ENCODE measurements at regions of chr4 and their contacts with region 1.

Region 1: GRCh38 chr4:69689599-69689998 is 36.6 kb upstream of the UGT2A1 start:
- DNase-seq: no peak
- H3K4me3 Mint-ChIP-seq: no peak overlapping the region
- H3K27ac Mint-ChIP-seq: no peak overlapping the region
- H3K4me1 Mint-ChIP-seq: no peaks in the 10 kb centered on the region
- H3K27me3 Mint-ChIP-seq: peaks cover 6% of the 10 kb centered on the region

Region 2: GRCh38 chr4:69823481-69824186 is 134.0 kb after region 1 on chr4:
- intact Hi-C with region 1: loop called (anchors 1 kb)
- DNase-seq: no peak
- H3K4me3 Mint-ChIP-seq: no peak overlapping the region
- H3K27ac Mint-ChIP-seq: no peak overlapping the region
- H3K4me1 Mint-ChIP-seq: peaks cover 5% of the 10 kb centered on the region
- H3K27me3 Mint-ChIP-seq: no peaks in the 10 kb centered on the region

Region 3: DNA sequence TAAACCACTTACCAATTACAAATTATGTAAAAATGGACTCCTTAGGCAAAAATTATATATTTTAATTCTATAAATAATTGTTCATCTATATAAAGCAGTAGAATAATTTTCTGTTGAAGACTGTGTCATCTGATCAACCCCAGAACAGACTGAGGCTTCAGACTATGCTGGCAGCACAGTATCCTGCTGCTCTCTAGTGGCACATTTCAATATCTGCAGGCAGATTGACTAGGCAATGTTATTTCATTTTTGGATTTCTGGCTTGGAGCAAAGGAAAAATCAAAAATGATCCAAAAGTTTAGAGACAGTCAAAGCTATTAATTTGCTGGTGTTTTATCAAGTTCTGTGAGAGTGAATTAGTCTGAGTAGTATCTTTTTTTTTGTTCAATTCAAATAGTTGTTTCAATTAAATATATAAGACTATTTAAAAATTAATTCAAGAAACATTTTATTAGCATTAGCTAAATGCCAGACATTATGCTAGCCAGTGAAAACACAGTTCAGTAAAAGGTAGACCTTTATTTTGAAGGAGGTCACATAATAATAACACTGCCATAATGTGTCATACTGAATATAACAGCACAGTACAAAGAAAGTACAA is 191.7 kb after region 1 on chr4:
- intact Hi-C with region 1: loop called (anchors 1 kb)
- DNase-seq: no peak
- H3K4me3 Mint-ChIP-seq: no peak overlapping the region
- H3K27ac Mint-ChIP-seq: no peak overlapping the region
- H3K4me1 Mint-ChIP-seq: no peaks in the 10 kb centered on the region
- H3K27me3 Mint-ChIP-seq: peaks cover 3% of the 10 kb centered on the region

Region 4: DNA sequence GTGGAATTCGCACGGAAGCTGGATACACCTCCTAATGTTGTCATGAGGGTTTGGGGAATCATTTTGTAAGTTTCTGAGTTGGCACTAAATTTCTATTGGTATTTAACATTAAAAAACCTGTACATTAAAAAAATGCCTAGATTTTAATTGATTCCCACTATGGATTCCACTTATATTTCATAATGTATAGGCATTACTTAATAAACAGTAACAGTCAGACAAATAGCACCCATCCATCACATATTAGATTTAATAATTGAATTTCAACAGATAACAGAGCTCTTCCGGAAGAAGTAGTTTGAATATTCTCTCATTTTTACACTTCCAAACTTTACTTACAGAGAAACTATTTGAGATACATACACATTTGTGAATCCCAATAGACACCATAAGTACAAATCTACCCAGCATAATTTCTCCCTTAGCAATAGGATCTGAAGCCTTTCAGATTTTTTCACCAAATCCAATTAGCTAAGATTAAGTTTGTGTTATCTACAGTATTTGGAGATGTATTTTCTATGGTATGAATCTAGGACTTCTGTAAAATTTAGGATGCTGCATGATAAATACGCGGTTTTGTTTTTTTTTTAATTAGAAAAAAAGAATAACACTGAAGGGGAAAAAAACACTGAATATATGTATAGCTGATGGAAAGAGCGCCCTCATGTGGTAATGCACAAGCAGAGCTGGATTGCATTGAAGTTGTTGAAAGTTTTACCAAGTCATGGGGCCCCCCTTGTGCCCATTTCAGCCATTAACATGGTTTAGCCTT is 493.8 kb after region 1 on chr4:
- intact Hi-C with region 1: loop called (anchors 1 kb)
- DNase-seq: peak; percentile 0
- H3K4me3 Mint-ChIP-seq: no peak overlapping the region
- H3K27ac Mint-ChIP-seq: no peak overlapping the region
- H3K4me1 Mint-ChIP-seq: no peaks in the 10 kb centered on the region
- H3K27me3 Mint-ChIP-seq: no peaks in the 10 kb centered on the region

Region 5: DNA sequence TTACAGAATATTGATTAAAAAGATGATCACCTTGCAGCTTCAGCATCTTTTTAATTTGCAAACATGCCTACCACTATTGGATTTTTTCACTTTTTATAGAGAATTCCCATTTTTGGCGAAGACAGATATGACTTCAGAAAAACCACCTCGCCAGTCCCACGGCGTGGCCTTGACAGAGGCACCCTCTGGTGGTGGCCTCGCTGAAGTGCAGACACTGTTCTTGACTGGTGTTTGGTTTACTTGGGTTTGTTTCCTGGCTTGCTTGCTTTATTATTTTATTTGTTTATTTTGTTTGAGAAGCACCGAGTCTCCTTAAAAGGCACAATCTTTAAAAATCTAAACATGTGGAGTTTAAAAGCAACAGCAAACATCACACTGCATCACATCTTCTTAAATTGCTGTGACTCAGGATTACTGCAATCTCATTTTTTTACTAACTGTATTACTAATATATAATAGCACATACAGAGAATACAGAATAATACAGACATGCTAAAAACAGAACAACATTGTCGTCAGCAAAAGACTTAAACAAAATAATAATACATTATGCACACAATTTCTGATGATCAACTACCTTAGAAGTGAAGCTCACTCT is 815.7 kb after region 1 on chr4:
- intact Hi-C with region 1: loop called (anchors 1 kb)
- DNase-seq: peak; percentile 43
- H3K4me3 Mint-ChIP-seq: no peak overlapping the region
- H3K27ac Mint-ChIP-seq: no peak overlapping the region
- H3K4me1 Mint-ChIP-seq: no peaks in the 10 kb centered on the region
- H3K27me3 Mint-ChIP-seq: no peaks in the 10 kb centered on the region

Region 6: DNA sequence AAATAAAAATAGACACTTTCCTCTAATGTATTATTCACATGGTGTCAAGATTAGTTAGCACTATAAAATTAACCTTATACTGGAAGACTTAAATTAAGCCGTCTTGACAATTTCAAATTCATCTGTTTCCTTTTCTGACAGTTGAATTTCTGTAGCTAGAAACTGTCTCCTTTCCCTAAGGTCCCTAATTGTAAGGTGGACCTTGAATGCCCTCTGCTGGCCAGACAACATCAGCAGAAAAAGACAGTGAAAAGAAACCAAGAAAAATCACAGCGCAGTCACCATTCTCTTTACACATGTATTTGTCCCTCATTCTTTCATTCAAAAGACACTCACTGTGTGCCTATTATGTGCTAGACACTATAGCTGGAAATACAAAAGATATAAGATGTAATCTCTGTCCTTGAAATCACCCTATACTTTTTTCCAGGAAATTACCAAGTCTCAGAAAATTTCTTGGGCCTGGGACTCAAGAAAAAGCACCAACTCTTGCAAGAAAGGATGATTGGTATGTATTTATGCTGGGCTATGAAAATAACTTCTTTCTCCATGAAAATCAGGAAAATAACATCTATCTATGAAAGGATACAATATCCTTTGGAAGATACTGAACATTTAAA is 869.7 kb after region 1 on chr4:
- intact Hi-C with region 1: loop called (anchors 5 kb)
- DNase-seq: peak; percentile 2
- H3K4me3 Mint-ChIP-seq: no peak overlapping the region
- H3K27ac Mint-ChIP-seq: no peak overlapping the region
- H3K4me1 Mint-ChIP-seq: no peaks in the 10 kb centered on the region
- H3K27me3 Mint-ChIP-seq: peaks cover 3% of the 10 kb centered on the region

Measured in activated T-helper 1 cell treated with anti-CD3 and anti-CD28 coated beads, Interleukin-12 subunit alpha, Interleukin-12 subunit beta, Interleukin-2, Interleukin-4 antibody, amounts not matched to agents 30 ng/mL and 10 ng/mL and 1 ng/mL, durations not matched to agents 14 hours and 24 hours and 36 hours (primary cell).